ENCODE measurements at regions of chr10 and their contacts with region 1.

Region 1: GRCh38 chr10:121734589-121735045 is 136.4 kb upstream of the FGFR2 start:
- DNase-seq: peak; percentile 57
- H3K4me3 Mint-ChIP-seq: no peak overlapping the region
- H3K27ac Mint-ChIP-seq: no peak overlapping the region
- H3K4me1 Mint-ChIP-seq: no peaks in the 10 kb centered on the region
- H3K27me3 Mint-ChIP-seq: no peaks in the 10 kb centered on the region
- CTCF ChIP-seq: peak; percentile 57

Region 2: GRCh38 chr10:121088524-121088923 is 646.1 kb before region 1 on chr10:
- CTCF ChIA-PET with region 1: interaction called, 4 read pairs
- POLR2A ChIA-PET with region 1: no interaction called
- intact Hi-C with region 1: loop called (anchors 1 kb)
- DNase-seq: peak; percentile 36
- H3K4me3 Mint-ChIP-seq: no peak overlapping the region
- H3K27ac Mint-ChIP-seq: no peak overlapping the region
- H3K4me1 Mint-ChIP-seq: peaks cover 21% of the 10 kb centered on the region
- H3K27me3 Mint-ChIP-seq: no peaks in the 10 kb centered on the region
- CTCF ChIP-seq: peak; percentile 25

Region 3: DNA sequence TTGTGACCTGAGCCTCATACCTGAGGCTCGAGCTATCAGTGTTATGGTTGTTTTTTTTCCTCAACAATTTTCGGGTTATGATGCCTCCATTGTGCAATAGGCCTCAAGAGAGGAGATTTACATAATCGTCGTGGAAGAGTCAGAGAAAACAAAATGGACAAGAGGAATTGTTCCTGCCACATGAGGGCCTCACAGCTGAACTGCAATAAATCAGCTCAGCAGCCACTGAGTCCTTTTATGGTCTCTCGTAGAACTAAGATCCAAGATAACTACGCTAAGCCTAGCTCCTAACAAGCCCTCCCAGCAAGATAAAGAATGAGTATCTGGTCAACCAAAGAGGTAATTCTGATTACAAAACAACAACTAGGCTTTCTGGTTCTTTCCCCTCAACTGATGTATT is 546.6 kb before region 1 on chr10:
- CTCF ChIA-PET with region 1: no interaction called
- POLR2A ChIA-PET with region 1: no interaction called
- intact Hi-C with region 1: loop called (anchors 10 kb)
- DNase-seq: peak; percentile 26
- H3K4me3 Mint-ChIP-seq: no peak overlapping the region
- H3K27ac Mint-ChIP-seq: no peak overlapping the region
- H3K4me1 Mint-ChIP-seq: no peaks in the 10 kb centered on the region
- H3K27me3 Mint-ChIP-seq: no peaks in the 10 kb centered on the region
- CTCF ChIP-seq: no peak

Region 4: DNA sequence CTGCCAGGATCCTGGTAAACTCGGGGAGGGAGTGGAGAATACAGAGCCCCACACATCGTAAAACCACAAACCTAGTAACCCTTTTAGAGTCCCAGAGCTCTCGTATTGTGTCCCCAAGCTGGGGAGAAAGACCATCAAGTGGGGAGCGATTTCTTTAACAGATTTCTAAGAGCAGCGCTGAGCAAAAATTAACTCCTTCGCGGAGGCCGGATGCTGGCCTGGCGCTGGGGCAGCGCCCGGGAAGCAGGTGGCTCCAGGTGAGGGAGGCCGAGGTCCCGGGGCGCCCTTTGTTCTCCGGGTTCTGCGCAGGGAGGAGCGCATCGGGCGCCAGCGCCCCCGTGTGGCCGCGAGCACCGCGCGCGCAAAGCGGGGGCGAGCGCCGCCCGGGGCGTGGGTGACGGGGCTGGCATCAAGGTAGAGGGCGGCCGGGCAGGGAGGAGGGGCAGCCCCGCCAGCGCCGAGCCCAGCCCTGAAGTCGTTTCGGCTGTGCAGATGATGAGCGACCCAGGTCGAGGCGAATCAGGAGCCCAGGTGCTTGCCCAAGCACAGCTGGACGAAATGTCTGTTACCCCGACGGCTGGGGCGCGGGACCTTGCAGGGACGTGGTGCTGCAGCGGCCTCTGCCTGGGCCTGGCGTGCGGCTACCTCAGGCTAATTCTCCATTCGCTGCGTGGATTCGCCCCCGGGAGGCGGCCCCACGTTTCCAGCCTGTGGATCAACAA is 126.0 kb before region 1 on chr10:
- CTCF ChIA-PET with region 1: interaction called, 5 read pairs
- POLR2A ChIA-PET with region 1: no interaction called
- intact Hi-C with region 1: loop called (anchors 10 kb)
- DNase-seq: peak; percentile 54
- H3K4me3 Mint-ChIP-seq: peak overlapping the region; percentile 56
- H3K27ac Mint-ChIP-seq: no peak overlapping the region
- H3K4me1 Mint-ChIP-seq: peaks cover 19% of the 10 kb centered on the region
- H3K27me3 Mint-ChIP-seq: no peaks in the 10 kb centered on the region
- CTCF ChIP-seq: peak; percentile 87

Region 5: DNA sequence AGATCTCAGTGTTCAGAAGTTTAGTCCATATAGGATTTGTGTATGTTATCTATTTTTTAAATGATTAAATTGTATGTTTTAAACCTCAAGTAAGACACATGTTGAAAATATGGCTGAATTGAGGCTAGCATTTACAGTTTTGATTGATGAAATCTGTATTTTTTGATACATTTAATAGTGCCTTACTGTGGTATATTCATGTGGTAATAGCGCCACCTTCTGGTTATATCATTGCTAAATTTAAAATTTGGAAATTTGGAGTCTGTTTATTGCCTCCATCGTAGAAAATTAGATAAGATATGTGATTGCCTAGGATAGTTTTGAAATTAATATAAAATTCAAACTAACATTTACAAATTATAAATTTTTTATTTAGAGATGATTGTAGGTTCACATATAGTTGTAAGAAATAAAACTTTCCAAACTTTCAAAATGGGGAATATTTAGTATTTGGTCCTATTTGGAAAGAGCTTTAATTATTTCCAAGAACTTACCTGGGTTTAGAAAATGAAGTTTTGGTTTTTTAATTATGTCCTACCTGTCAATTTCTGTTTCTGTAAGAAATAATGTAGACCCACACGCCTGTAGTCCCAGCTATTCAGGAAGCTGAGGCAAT is 700.7 kb after region 1 on chr10:
- CTCF ChIA-PET with region 1: no interaction called
- POLR2A ChIA-PET with region 1: no interaction called
- intact Hi-C with region 1: no loop called
- DNase-seq: peak; percentile 55
- H3K4me3 Mint-ChIP-seq: no peak overlapping the region
- H3K27ac Mint-ChIP-seq: no peak overlapping the region
- H3K4me1 Mint-ChIP-seq: no peaks in the 10 kb centered on the region
- H3K27me3 Mint-ChIP-seq: no peaks in the 10 kb centered on the region
- CTCF ChIP-seq: peak; percentile 51